ENCODE measurements at regions of chr6 and their contacts with region 1.

Region 1: DNA sequence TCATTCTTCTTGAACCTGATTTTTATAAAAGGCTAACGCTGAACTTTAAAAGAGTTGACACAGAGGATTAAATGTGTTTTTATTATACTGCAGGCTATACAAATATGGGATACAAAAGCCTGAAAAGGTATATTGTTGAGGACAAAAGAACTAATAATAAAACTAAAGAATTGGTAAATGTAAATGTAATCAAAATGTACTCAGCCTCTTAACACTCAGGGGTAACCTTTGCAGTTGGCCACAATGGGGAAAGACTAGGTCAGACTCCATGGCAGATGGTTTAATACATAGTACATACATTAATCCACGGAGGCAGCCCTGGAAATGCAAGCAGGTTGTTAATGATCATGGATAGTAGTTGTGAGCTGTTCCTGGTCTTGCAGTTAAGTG is 57.5 kb downstream of the SOBP start:
- DNase-seq: no peak
- H3K4me3 ChIP-seq: no peak overlapping the region
- H3K27ac ChIP-seq: no peak overlapping the region
- H3K4me1 ChIP-seq: no peaks in the 10 kb centered on the region
- H3K27me3 ChIP-seq: no peaks in the 10 kb centered on the region
- CTCF ChIP-seq: no peak

Region 2: GRCh38 chr6:107532706-107533105 is 14.7 kb before region 1 on chr6:
- CTCF ChIA-PET with region 1: no interaction called
- POLR2A ChIA-PET with region 1: interaction called, 10 read pairs
- intact Hi-C with region 1: no loop called
- DNase-seq: no peak
- H3K4me3 ChIP-seq: no peak overlapping the region
- H3K27ac ChIP-seq: no peak overlapping the region
- H3K4me1 ChIP-seq: no peaks in the 10 kb centered on the region
- H3K27me3 ChIP-seq: no peaks in the 10 kb centered on the region
- CTCF ChIP-seq: no peak